Activated CD4-positive, alpha-beta memory T cell treated with anti-CD3 and anti-CD28 coated beads for 36 hours (primary cell): ENCODE measurements at regions of chr1 and their contacts with region 1.

Region 1: GRCh38 chr1:186985889-186986491 is 157.2 kb downstream of the PLA2G4A start:
- DNase-seq: no peak
- H3K4me3 Mint-ChIP-seq: no peak overlapping the region
- H3K27ac Mint-ChIP-seq: no peak overlapping the region
- H3K4me1 Mint-ChIP-seq: no peaks in the 10 kb centered on the region
- H3K27me3 Mint-ChIP-seq: peaks cover 3% of the 10 kb centered on the region

Region 2: GRCh38 chr1:186404454-186405051 is 581.4 kb before region 1 on chr1:
- CTCF ChIA-PET with region 1: interaction called, 8 read pairs
- POLR2A ChIA-PET with region 1: no interaction called
- intact Hi-C with region 1: loop called (anchors 2 kb)
- DNase-seq: no peak
- H3K4me3 Mint-ChIP-seq: no peak overlapping the region
- H3K27ac Mint-ChIP-seq: no peak overlapping the region
- H3K4me1 Mint-ChIP-seq: no peaks in the 10 kb centered on the region
- H3K27me3 Mint-ChIP-seq: no peaks in the 10 kb centered on the region

Region 3: DNA sequence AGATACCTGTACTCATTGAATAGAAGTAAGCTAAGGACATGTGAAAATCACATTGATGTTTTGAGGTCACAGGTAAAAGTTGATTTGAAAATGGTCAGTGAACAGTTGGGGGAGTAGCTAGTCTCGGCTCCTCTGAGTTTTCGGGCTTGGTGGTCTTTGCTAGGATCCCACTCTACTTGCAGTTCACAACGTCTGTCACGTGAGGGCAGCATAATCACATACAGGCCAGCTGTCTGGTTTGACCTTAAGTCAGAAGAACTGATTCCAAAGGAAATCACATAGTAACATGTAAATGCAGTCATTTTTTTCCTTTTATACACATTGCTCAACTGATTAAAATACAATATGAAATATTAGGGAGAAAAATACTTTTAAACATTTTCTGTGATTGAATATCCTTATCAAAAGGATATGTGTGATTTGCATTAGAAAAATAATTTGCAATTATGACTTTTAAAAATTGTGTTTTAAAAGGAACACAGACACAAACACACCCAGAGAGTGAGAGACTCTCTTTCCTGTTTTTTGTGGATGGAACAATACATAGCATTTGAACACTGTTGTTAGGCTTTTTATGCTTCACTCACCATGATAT is 503.2 kb before region 1 on chr1:
- CTCF ChIA-PET with region 1: interaction called, 10 read pairs
- POLR2A ChIA-PET with region 1: no interaction called
- intact Hi-C with region 1: loop called (anchors 1 kb)
- DNase-seq: peak; percentile 53
- H3K4me3 Mint-ChIP-seq: no peak overlapping the region
- H3K27ac Mint-ChIP-seq: no peak overlapping the region
- H3K4me1 Mint-ChIP-seq: no peaks in the 10 kb centered on the region
- H3K27me3 Mint-ChIP-seq: no peaks in the 10 kb centered on the region

Region 4: GRCh38 chr1:186605762-186606350 is 380.1 kb before region 1 on chr1:
- CTCF ChIA-PET with region 1: interaction called, 16 read pairs
- POLR2A ChIA-PET with region 1: no interaction called
- intact Hi-C with region 1: loop called (anchors 1 kb)
- DNase-seq: peak; percentile 30
- H3K4me3 Mint-ChIP-seq: no peak overlapping the region
- H3K27ac Mint-ChIP-seq: no peak overlapping the region
- H3K4me1 Mint-ChIP-seq: no peaks in the 10 kb centered on the region
- H3K27me3 Mint-ChIP-seq: peaks cover 15% of the 10 kb centered on the region

Region 5: DNA sequence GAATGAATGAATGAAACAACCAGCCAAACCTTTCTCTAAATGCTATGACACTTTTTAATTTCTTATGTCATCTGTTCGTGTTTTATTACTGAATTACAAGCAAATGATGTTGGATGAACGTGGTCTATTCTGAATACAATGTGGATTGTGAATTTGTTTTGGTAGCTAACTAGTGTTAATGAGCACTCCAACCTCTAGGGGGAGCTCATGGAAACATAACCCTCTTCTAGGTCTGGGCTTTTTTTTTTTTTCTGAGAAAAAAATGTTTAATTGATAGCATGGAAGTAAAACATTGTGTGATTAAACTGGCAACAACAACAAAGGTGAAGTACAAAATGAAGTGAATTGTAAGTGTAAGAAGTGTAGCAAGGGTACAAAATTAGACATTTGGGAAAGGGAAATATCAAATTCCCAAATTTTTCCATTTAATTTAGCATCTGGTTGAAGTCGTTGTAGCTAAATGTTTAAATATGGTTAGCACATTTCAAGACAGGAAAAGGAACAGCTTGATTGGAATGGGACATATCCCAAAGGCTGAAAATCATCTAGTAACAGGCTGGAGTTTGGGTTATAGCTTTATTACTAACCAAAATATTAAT is 263.2 kb before region 1 on chr1:
- CTCF ChIA-PET with region 1: interaction called, 9 read pairs
- POLR2A ChIA-PET with region 1: no interaction called
- intact Hi-C with region 1: loop called (anchors 1 kb)
- DNase-seq: no peak
- H3K4me3 Mint-ChIP-seq: no peak overlapping the region
- H3K27ac Mint-ChIP-seq: no peak overlapping the region
- H3K4me1 Mint-ChIP-seq: no peaks in the 10 kb centered on the region
- H3K27me3 Mint-ChIP-seq: no peaks in the 10 kb centered on the region

Region 6: DNA sequence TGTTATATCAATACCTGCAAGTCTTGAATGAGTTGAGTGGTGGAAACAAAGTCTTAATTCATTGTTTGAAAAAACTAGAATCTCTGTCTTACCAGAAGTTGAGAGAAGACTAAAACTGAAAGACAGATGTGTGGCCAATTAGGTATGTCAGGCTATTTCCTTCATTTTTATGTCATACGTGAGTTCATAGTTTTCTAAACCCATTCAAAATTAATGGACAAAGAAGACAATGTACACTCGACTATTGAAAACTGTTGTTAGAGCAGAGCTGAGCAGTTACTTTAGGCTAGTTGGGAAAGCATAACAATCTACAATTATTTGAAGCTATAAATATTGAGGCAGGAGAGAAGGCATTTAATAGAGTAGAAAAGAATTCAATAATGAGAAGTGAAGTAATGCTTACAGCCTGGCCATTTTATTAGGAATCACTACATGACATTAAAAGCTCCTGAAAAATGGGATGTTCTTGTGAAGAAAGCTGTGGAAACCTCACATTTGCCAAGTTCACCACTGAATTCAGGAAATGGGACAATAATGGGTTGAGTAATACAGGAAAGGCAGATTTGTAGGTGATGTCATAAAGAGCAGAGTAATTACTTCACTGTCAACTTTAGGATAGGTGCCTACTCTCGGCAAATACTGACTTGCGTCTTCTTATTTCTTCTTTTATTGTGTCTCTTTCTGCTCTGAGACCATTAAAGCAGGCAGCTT is 47.1 kb after region 1 on chr1:
- CTCF ChIA-PET with region 1: no interaction called
- POLR2A ChIA-PET with region 1: no interaction called
- intact Hi-C with region 1: no loop called
- DNase-seq: no peak
- H3K4me3 Mint-ChIP-seq: no peak overlapping the region
- H3K27ac Mint-ChIP-seq: no peak overlapping the region
- H3K4me1 Mint-ChIP-seq: no peaks in the 10 kb centered on the region
- H3K27me3 Mint-ChIP-seq: no peaks in the 10 kb centered on the region